Activated T-helper 1 cell treated with anti-CD3 and anti-CD28 coated beads, Interleukin-12 subunit alpha, Interleukin-12 subunit beta, Interleukin-2, Interleukin-4 antibody, amounts not matched to agents 30 ng/mL and 10 ng/mL and 1 ng/mL, durations not matched to agents 14 hours and 24 hours and 36 hours (primary cell): ENCODE measurements at regions of chr1 and their contacts with region 1.

Region 1: GRCh38 chr1:112706908-112707663 is at the start of gene RHOC:
- DNase-seq: peak; percentile 60
- H3K4me3 Mint-ChIP-seq: peak within 1 kb of the TSS; percentile 84
- H3K27ac Mint-ChIP-seq: peak within 1 kb of the TSS; percentile 91
- H3K4me1 Mint-ChIP-seq: peaks cover 55% of the 10 kb centered on the region
- H3K27me3 Mint-ChIP-seq: peaks cover 13% of the 10 kb centered on the region
- total RNA-seq, gene RHOC: 50.4 and 63.4 TPM in 2 replicates

Region 2: GRCh38 chr1:112395821-112396652 is 311.0 kb before region 1 on chr1 and contains the start of gene CTTNBP2NL:
- intact Hi-C with region 1: loop called (anchors 1 kb)
- DNase-seq: peak; percentile 76
- H3K4me3 Mint-ChIP-seq: peak within 1 kb of the TSS; percentile 99
- H3K27ac Mint-ChIP-seq: peak within 1 kb of the TSS; percentile 85
- H3K4me1 Mint-ChIP-seq: peaks cover 49% of the 10 kb centered on the region
- H3K27me3 Mint-ChIP-seq: peaks cover 7% of the 10 kb centered on the region
- total RNA-seq, gene CTTNBP2NL: 3.9 and 4.7 TPM in 2 replicates

Region 3: GRCh38 chr1:112501810-112502641 is 205.1 kb before region 1 on chr1:
- intact Hi-C with region 1: loop called (anchors 1 kb)
- DNase-seq: peak; percentile 33
- H3K4me3 Mint-ChIP-seq: peak overlapping the region; percentile 63
- H3K27ac Mint-ChIP-seq: no peak overlapping the region
- H3K4me1 Mint-ChIP-seq: peaks cover 5% of the 10 kb centered on the region
- H3K27me3 Mint-ChIP-seq: peaks cover 62% of the 10 kb centered on the region

Region 4: DNA sequence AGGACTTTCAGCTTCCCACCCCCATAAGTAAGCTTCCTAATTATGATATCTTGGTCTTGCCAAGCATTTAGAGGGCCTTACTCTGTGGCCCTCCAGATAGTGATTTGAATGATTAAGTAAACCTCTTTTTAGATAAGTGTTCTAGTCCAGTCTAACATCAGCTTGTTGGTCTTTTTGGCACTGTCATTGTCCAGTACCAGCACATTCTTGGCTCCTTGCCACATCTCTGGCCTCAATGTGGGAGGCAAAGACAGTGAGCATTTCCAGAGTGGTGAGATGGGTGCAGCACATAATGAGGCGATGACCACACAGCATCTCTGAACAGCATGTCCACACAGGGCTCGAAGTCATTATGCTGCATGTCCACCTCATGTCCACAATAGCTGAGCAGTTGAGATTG is 81.4 kb before region 1 on chr1:
- intact Hi-C with region 1: no loop called
- DNase-seq: no peak
- H3K4me3 Mint-ChIP-seq: peak overlapping the region; percentile 33
- H3K27ac Mint-ChIP-seq: peak overlapping the region; percentile 26
- H3K4me1 Mint-ChIP-seq: peaks cover 78% of the 10 kb centered on the region
- H3K27me3 Mint-ChIP-seq: no peaks in the 10 kb centered on the region

Region 5: GRCh38 chr1:112666946-112667345 is 40.1 kb before region 1 on chr1:
- intact Hi-C with region 1: loop called (anchors 2 kb)
- DNase-seq: no peak
- H3K4me3 Mint-ChIP-seq: no peak overlapping the region
- H3K27ac Mint-ChIP-seq: peak overlapping the region; percentile 76
- H3K4me1 Mint-ChIP-seq: peaks cover 28% of the 10 kb centered on the region
- H3K27me3 Mint-ChIP-seq: no peaks in the 10 kb centered on the region